Pancreas (tissue), 10 donors: ENCODE measurements at regions of chr9 and their contacts with region 1.

Region 1: GRCh38 chr9:35559792-35560530 is 45.1 kb upstream of the TESK1 start:
- DNase-seq: peak in 1 of 6 donors; percentile 44
- ATAC-seq: no peak
- H3K4me3 ChIP-seq: no peak overlapping the region
- H3K27ac ChIP-seq: no peak overlapping the region
- H3K4me1 ChIP-seq: no peaks in the 10 kb centered on the region
- H3K27me3 ChIP-seq: no peaks in the 10 kb centered on the region
- CTCF ChIP-seq: no peak

Region 2: GRCh38 chr9:35481347-35481975 is 78.5 kb before region 1 on chr9:
- intact Hi-C with region 1: loop called in 2 of 3 experiments (anchors 5 kb)
- DNase-seq: peak in 4 of 6 donors; percentile 48 to 64 (median 58)
- ATAC-seq: peak; percentile 53 to 80 (median 76)
- H3K4me3 ChIP-seq: no peak overlapping the region
- H3K27ac ChIP-seq: no peak overlapping the region
- H3K4me1 ChIP-seq: no peaks in the 10 kb centered on the region
- H3K27me3 ChIP-seq: no peaks in the 10 kb centered on the region
- CTCF ChIP-seq: peak; percentile 22 to 52 (median 48)